ENCODE measurements at regions of chr1 and their contacts with region 1.

Region 1: DNA sequence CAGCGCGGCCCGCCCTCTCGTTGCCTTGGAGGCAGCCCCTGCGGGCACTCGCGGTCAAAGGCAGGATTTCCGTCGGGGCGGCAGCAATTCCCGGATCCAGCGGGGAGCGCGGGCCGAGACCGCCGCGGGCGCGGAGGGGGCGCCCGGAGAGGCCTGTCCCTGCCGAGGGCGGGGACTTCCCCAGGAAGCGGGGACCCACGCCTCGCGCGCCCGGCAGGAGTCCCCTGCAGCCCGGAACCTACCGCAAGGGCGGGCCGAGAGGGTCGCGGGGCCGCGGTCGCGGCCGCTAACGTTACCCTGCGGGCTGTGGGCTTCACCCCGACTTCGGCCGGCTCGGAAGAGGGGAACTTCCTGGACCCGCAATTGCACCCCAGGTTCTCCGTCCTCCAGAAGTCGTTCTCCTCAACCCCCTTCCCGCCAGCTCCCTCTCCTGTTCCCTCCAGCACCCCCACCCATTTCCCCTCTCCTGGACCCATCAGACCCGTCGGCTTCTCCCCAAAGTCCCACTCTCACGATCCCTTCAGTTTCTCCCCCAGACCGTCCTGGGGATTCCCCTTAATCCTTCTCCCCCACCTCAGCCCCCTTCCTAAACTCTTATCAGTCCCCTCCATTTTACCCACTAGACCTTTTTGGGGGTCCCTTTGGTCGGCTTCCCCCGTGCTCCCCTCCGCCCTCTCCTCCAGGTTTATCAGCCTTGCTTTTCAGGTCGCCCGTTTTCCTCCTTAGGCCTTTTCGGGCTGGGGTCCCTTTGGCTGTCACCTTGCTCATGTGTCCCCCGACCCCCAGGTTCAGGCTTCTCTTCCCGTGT is 604 bp downstream of the FGR start:
- DNase-seq: peak; percentile 69
- ATAC-seq: peak; percentile 12
- H3K4me3 Mint-ChIP-seq: peak overlapping the region; percentile 65
- H3K27ac Mint-ChIP-seq: peak overlapping the region; percentile 71
- H3K4me1 Mint-ChIP-seq: peaks cover 53% of the 10 kb centered on the region
- H3K27me3 Mint-ChIP-seq: peaks cover 6% of the 10 kb centered on the region

Region 2: GRCh38 chr1:27616441-27616840 is 17.9 kb before region 1 on chr1:
- POLR2A ChIA-PET with region 1: interaction called, 12 read pairs
- DNase-seq: no peak
- ATAC-seq: no peak
- H3K4me3 Mint-ChIP-seq: no peak overlapping the region
- H3K27ac Mint-ChIP-seq: no peak overlapping the region
- H3K4me1 Mint-ChIP-seq: peaks cover 28% of the 10 kb centered on the region
- H3K27me3 Mint-ChIP-seq: no peaks in the 10 kb centered on the region